Naive thymus-derived CD8-positive, alpha-beta T cell (primary cell): ENCODE measurements at regions of chr15 and their contacts with region 1.

Region 1: GRCh38 chr15:40192942-40193341 is 32.1 kb downstream of the BUB1B start:
- DNase-seq: no peak
- ATAC-seq: no peak
- H3K4me3 Mint-ChIP-seq: no peak overlapping the region
- H3K27ac Mint-ChIP-seq: no peak overlapping the region
- H3K4me1 Mint-ChIP-seq: peaks cover 8 to 15% (median 9%) of the 10 kb centered on the region in 4 donors
- H3K27me3 Mint-ChIP-seq: peaks cover 0 to 9% (median 0%) of the 10 kb centered on the region in 5 donors

Region 2: DNA sequence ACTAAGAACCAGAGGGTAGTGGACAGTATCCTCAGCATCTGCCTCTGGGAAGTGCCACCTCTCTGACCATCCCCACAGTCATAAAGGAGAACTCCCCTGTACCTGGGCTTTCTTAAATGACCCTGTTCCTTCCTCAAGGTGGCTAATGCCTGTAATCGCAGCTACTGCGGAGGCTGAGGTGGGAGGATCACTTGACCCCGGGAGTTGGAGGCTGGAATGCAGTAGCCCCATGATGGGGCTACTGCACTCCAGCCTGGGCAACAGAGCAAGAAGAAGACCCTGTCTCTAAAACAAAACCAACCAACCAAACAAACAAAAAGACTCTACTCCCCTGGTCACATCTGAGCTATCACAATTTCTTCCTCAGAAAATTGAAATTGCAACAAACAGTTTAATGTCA is 32.9 kb before region 1 on chr15:
- POLR2A ChIA-PET with region 1: interaction called, 10 read pairs
- DNase-seq: no peak
- ATAC-seq: no peak
- H3K4me3 Mint-ChIP-seq: no peak overlapping the region
- H3K27ac Mint-ChIP-seq: peak overlapping the region in 1 of 10 donors; percentile 29
- H3K4me1 Mint-ChIP-seq: peaks cover 0 to 3% (median 0%) of the 10 kb centered on the region in 4 donors
- H3K27me3 Mint-ChIP-seq: peaks cover 0 to 1% (median 0%) of the 10 kb centered on the region in 5 donors

Region 3: DNA sequence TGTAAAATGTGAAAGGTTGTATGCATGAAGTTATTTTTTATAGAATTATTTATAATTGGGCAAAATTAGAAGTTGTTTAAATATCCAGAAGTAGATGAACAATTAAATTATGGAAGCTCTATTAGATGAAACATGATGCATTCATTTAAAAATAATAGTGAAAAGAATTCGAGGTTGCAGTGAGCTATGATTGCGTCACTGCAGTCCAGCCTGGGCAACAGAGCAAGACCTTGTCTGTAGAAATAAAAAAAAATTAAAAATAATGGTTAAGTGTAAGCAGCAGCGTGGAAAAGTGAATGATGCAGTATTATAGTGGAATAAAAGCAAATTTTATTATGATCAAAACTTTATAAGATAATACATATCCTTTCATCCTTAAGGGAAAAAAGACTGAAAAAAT is 17.8 kb before region 1 on chr15:
- POLR2A ChIA-PET with region 1: no interaction called
- DNase-seq: no peak
- ATAC-seq: no peak
- H3K4me3 Mint-ChIP-seq: no peak overlapping the region
- H3K27ac Mint-ChIP-seq: no peak overlapping the region
- H3K4me1 Mint-ChIP-seq: no peaks in the 10 kb centered on the region
- H3K27me3 Mint-ChIP-seq: no peaks in the 10 kb centered on the region

Region 4: DNA sequence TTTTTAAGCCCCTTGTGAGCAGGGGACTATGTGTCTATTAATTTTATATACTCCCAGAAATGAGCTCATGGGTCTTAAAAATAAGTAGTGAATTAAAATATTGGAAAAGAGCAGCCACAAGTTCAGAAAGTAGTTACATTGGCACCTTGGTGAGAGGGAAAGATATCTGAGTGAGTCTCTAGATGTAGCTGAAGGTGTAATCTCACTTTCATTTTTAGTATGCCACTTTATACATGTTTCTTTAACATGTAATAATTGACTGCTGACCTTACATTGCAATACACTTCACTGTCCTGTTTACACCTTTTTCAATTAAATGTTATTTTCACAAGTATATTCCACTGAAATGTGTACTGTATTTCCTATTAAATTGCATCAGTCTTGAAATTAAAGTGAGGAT is 33.8 kb after region 1 on chr15:
- POLR2A ChIA-PET with region 1: no interaction called
- DNase-seq: no peak
- ATAC-seq: no peak
- H3K4me3 Mint-ChIP-seq: no peak overlapping the region
- H3K27ac Mint-ChIP-seq: no peak overlapping the region
- H3K4me1 Mint-ChIP-seq: peaks cover 0 to 1% (median 0%) of the 10 kb centered on the region in 4 donors
- H3K27me3 Mint-ChIP-seq: no peaks in the 10 kb centered on the region

Region 5: DNA sequence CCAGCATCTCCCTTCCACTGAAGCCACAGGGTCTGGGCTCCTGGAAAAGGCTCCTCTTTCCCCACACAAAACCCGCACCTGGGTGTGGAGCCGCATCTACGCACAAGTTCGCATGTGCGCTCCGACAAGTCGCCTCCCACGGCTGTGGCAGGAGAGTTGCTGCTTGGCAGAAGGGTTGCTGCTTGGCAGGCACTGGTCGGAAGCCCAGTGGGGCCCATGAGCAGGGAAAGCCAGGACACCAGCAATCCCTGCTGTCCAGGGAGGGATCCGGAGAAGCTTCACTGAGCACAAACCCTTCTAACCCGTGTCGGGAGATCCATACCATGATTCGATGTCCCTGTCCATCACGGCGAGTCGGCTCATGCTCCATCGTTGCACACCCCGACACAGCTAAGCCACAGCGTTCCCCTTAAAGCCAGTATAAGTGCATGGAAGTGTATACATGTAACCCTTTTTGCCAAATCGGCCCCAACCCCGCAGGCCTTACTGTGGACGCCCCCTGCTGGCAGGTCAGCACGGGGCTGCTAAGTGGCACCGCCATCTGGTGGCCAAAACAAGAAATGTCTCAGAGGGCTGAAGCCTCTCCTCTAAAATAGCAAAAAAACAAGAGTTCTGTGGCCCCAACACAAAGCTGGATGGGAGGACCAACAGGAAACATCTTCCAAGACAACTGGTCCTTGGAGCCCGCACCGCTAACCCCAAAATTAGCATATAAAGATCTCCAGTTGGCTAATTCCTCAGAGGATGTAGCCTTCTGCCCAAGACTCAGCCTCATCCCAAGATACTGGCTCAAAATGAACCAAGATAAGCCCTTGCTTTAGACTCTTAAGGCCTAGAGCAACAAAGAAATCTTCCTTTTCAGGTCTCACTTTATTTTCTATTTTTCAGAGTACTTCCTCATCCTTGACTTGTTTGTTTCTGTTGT is 81.7 kb after region 1 on chr15:
- POLR2A ChIA-PET with region 1: no interaction called
- DNase-seq: peak; percentile 72 to 91 (median 87)
- ATAC-seq: peak; percentile 87
- H3K4me3 Mint-ChIP-seq: peak overlapping the region in 2 of 10 donors; percentile 23 to 33
- H3K27ac Mint-ChIP-seq: peak overlapping the region in 4 of 10 donors; percentile 45 to 77 (median 62)
- H3K4me1 Mint-ChIP-seq: peaks cover 0 to 18% (median 8%) of the 10 kb centered on the region in 4 donors
- H3K27me3 Mint-ChIP-seq: peaks cover 4 to 36% (median 13%) of the 10 kb centered on the region in 5 donors